Activated T-helper 1 cell treated with anti-CD3 and anti-CD28 coated beads, Interleukin-12 subunit alpha, Interleukin-12 subunit beta, Interleukin-2, Interleukin-4 antibody, amounts not matched to agents 30 ng/mL and 10 ng/mL and 1 ng/mL, durations not matched to agents 14 hours and 24 hours and 36 hours (primary cell): ENCODE measurements at regions of chr12 and their contacts with region 1.

Region 1: GRCh38 chr12:55619354-55620138 is 17.1 kb upstream of the OR10P1 start:
- DNase-seq: peak; percentile 31
- H3K4me3 Mint-ChIP-seq: no peak overlapping the region
- H3K27ac Mint-ChIP-seq: no peak overlapping the region
- H3K4me1 Mint-ChIP-seq: no peaks in the 10 kb centered on the region
- H3K27me3 Mint-ChIP-seq: peaks cover 2% of the 10 kb centered on the region

Region 2: GRCh38 chr12:54865683-54866324 is 753.7 kb before region 1 on chr12:
- intact Hi-C with region 1: loop called (anchors 10 kb)
- DNase-seq: no peak
- H3K4me3 Mint-ChIP-seq: no peak overlapping the region
- H3K27ac Mint-ChIP-seq: no peak overlapping the region
- H3K4me1 Mint-ChIP-seq: peaks cover 19% of the 10 kb centered on the region
- H3K27me3 Mint-ChIP-seq: peaks cover 18% of the 10 kb centered on the region

Region 3: DNA sequence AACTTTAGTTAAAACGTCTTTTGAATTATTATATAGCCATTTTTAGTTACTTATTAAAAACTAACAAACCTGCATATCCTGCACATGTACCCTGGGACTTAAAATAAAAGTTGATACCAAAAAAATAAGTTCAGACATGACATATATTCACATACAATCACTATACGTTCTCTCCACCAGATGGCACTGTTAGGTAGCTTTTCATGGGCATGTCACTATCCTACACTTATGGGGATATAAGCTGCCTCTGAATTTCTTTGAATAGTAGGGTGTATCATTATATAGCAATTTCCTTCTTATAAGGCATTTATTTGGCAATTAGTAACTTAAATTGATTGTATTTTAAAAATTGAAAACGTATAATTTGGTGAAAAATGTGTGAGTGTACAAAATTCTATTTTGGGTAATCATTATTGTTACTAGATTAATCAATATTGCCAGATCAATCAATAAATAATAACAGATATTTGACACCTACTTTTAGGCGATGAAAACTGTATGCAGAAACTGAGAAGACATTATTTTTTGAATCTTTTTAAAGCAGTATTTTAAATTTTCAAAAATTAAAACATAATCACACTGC is 430.5 kb before region 1 on chr12:
- intact Hi-C with region 1: loop called (anchors 1 kb)
- DNase-seq: peak; percentile 33
- H3K4me3 Mint-ChIP-seq: no peak overlapping the region
- H3K27ac Mint-ChIP-seq: no peak overlapping the region
- H3K4me1 Mint-ChIP-seq: no peaks in the 10 kb centered on the region
- H3K27me3 Mint-ChIP-seq: peaks cover 11% of the 10 kb centered on the region

Region 4: GRCh38 chr12:55642669-55643068 is 23.1 kb after region 1 on chr12:
- intact Hi-C with region 1: loop called (anchors 2 kb)
- DNase-seq: no peak
- H3K4me3 Mint-ChIP-seq: no peak overlapping the region
- H3K27ac Mint-ChIP-seq: no peak overlapping the region
- H3K4me1 Mint-ChIP-seq: peaks cover 32% of the 10 kb centered on the region
- H3K27me3 Mint-ChIP-seq: peaks cover under 1% of the 10 kb centered on the region

Region 5: DNA sequence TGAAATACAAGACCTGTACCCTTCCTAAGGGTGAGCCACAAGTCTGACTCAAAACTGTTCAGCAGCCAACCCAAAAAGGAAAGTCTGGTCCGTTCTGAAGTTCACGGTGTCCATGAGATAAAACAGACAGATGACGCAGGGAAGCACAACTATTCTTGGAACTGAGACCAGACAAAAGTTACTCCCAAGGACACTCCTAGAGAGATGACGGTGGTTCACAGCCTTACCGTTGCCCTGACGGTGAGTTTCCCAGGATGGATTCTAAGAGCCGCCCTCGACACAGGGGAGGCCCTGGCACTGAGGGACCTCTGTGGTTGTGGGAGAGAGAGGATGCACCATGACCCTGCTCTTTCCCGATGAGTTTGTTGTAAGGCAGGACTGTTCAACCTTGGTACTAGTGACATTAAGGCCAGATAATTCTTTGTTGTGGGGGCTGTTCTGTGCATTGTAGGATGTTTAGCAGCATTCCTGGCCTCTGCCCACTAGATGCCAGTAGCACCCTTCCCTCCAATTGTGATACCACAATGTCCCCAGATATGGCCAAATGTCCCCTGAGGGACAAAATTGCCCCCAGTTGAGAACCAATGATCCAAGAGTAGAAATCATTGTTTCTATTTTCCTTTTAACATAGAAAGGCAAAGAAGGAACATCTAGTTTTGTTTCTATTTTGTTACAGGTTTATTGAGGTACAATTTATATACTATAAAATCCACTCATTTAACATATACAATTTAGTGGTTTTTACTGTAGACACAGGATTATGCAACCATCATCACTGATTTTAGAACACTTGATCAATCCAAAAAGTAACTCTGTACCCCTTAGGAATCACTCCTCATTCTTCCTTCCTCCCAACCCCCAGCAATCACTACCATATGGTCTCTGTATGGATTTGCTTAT is 40.2 kb after region 1 on chr12:
- intact Hi-C with region 1: loop called (anchors 2 kb)
- DNase-seq: no peak
- H3K4me3 Mint-ChIP-seq: no peak overlapping the region
- H3K27ac Mint-ChIP-seq: no peak overlapping the region
- H3K4me1 Mint-ChIP-seq: no peaks in the 10 kb centered on the region
- H3K27me3 Mint-ChIP-seq: peaks cover 25% of the 10 kb centered on the region

Region 6: GRCh38 chr12:57016318-57016717 is 1396.8 kb after region 1 on chr12 and contains the start of gene TAC3:
- intact Hi-C with region 1: no loop called
- DNase-seq: no peak
- H3K4me3 Mint-ChIP-seq: no peak within 1 kb of the TSS
- H3K27ac Mint-ChIP-seq: no peak within 1 kb of the TSS
- H3K4me1 Mint-ChIP-seq: peaks cover 17% of the 10 kb centered on the region
- H3K27me3 Mint-ChIP-seq: peaks cover 19% of the 10 kb centered on the region
- total RNA-seq, gene TAC3: 0.34 TPM in 1 of 2 replicates, not detected in the other